ENCODE measurements at regions of chr6 and their contacts with region 1.

Region 1: GRCh38 chr6:135323202-135323668 is 142.1 kb downstream of the MYB start:
- DNase-seq: peak; percentile 82 to 97 (median 86)
- ATAC-seq: peak; percentile 78
- H3K4me3 ChIP-seq: no peak overlapping the region
- H3K27ac ChIP-seq: peak overlapping the region; percentile 91
- H3K4me1 ChIP-seq: peaks cover 28 to 77% of the 10 kb centered on the region in 2 experiments
- H3K27me3 ChIP-seq: no peaks in the 10 kb centered on the region
- CTCF ChIP-seq: no peak; a peak in 1 of 6 replicates
- EP300 ChIP-seq: peak; percentile 100
- POLR2A ChIP-seq: no peak
- RAD21 ChIP-seq: peak; percentile 48 to 51; a peak in 3 of 4 replicates

Region 2: DNA sequence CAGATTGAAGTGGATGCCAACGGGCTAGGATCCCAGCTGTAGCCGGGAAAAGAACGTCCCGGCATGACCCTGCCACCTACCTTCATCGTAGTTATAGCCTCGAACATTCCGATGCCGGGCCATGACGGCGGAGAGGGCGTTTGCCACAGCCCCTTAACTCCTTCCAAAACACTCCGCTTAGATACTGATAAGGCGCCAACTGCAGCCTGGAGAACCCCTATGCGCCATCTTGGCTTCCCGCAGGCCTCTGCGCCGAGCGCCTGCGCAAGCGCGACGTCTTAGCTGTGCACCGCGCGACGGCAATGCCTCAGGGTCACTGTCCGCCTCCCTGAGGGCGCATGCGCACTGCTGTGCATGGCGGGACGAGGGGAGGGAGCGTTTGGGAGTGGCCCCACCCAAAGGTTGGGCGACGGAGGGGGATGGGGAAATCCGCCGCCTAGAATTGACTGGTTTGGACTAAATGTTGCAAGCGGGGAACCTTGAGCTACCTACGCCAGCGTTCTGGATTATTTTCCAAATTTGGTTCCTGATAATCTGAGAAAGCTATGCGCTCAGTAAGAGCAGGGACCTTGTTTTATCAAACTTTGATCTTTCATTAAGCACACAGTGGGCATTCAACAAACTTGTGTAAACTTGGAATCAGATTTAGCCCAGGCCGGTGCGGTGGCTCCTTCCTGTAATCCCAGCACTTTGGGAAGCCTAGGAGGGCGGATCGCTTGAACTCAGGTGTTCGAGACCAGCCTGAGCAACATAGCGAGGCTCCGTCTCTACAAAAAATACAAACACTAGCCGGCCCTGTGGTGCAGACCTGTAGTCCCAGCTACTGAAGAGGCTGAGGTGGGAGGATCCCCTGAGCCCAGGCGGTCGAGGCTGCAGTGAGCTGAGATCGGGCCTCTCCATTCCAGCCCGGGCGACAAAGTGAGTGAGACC is 268.4 kb before region 1 on chr6 and contains the start of gene HBS1L:
- CTCF ChIA-PET with region 1: no interaction called
- POLR2A ChIA-PET with region 1: no interaction called
- in situ Hi-C with region 1: no loop called
- intact Hi-C with region 1: loop called (anchors 5 kb)
- DNase-seq: peak; percentile 97 to 100 (median 98)
- ATAC-seq: peak; percentile 93
- H3K4me3 ChIP-seq: peak within 1 kb of the TSS; percentile 70
- H3K27ac ChIP-seq: peak within 1 kb of the TSS; percentile 94
- H3K4me1 ChIP-seq: peaks cover 3 to 11% of the 10 kb centered on the region in 2 experiments; a peak in 4 of 5 replicates
- H3K27me3 ChIP-seq: no peaks in the 10 kb centered on the region
- CTCF ChIP-seq: no peak
- EP300 ChIP-seq: no peak
- POLR2A ChIP-seq: peak; percentile 92
- RAD21 ChIP-seq: no peak
- polyA plus RNA-seq, gene HBS1L: 101 to 199 TPM

Region 3: DNA sequence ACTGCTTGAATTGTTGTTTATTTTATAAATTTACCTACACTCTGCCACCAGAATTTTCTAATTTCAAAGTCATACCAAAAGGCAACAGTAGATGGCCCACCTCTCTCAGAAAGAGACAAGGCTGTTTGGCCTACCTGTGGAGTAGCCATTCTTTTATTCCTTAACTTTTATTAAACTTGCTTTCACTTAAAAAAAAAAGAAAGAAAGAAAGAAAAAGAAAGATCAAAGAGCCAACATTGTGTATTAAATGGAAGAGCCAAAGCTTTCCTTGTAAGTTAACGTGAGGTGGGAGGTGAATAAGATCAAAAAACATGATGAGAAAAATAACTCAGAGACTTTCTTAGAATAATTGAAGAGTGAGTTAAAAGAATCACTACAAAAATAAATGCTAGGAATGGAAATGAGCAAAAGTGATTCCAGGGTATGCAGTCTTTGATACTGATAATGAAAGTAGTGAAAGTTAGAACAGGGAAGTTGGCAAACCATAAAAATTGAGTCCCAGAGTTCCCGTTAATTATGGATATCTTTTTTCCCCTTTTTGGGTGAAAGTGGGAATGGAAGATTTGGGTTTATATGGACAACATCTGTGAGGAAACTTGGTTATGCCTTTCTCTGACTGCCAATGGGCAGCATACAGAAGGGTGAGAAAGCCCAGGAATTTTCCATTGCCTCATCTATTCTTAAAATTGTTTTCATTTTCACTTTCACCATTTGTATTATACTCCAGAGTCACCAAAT is 178.0 kb before region 1 on chr6:
- CTCF ChIA-PET with region 1: no interaction called
- POLR2A ChIA-PET with region 1: no interaction called
- in situ Hi-C with region 1: no loop called
- intact Hi-C with region 1: loop called (anchors 1 kb)
- DNase-seq: peak; percentile 44 to 76 (median 50)
- ATAC-seq: peak; percentile 60
- H3K4me3 ChIP-seq: no peak overlapping the region
- H3K27ac ChIP-seq: peak overlapping the region; percentile 77
- H3K4me1 ChIP-seq: peaks cover 6 to 55% of the 10 kb centered on the region in 2 experiments
- H3K27me3 ChIP-seq: no peaks in the 10 kb centered on the region
- CTCF ChIP-seq: peak; percentile 61 to 85 (median 71); a peak in 5 of 6 replicates
- EP300 ChIP-seq: no peak
- POLR2A ChIP-seq: no peak
- RAD21 ChIP-seq: peak; percentile 86 to 91

Region 4: DNA sequence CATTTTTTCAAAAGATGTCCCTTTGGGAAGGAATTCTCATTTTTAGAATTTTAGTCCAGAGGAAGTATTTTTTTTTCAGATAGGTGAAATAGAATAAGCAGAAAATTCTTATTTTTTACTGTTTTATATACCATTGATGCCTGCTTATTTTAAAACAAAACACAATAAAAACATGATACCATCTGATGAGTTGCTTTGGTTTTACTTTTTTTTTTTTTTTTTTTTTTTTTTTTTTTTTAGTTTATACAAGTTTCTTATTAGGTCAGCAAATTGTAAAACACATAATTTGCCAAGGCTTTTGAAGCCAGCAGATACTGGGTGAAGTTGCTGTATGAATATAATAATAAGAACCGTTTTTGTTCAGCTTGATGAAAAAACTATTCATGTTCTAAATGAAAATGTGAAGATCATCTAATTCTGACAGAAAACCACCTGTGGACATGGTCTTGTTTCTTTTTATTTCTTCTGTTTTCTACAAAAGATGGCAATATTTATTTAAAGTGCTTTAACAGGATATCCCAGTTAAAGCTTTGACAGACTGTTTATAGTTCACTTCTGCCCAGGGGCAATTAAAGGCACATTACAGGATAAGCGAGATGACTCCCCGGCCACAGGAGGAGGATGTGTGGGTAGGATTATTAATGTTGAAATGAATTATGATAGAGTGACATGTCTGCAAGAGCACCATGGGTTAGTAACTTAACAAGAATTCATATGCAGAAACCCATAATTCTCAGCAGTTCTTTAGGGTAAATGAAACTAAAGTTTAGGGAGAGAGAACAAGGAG is 111.0 kb before region 1 on chr6:
- CTCF ChIA-PET with region 1: no interaction called
- POLR2A ChIA-PET with region 1: interaction called, 3 read pairs
- in situ Hi-C with region 1: no loop called
- intact Hi-C with region 1: loop called (anchors 5 kb)
- DNase-seq: no peak
- ATAC-seq: no peak
- H3K4me3 ChIP-seq: no peak overlapping the region
- H3K27ac ChIP-seq: no peak overlapping the region
- H3K4me1 ChIP-seq: no peaks in the 10 kb centered on the region; a peak in 1 of 5 replicates
- H3K27me3 ChIP-seq: no peaks in the 10 kb centered on the region
- CTCF ChIP-seq: no peak
- EP300 ChIP-seq: no peak
- POLR2A ChIP-seq: no peak
- RAD21 ChIP-seq: no peak

Region 5: GRCh38 chr6:135257631-135258405 is 65.4 kb before region 1 on chr6:
- CTCF ChIA-PET with region 1: no interaction called
- POLR2A ChIA-PET with region 1: no interaction called
- in situ Hi-C with region 1: no loop called
- intact Hi-C with region 1: loop called (anchors 5 kb)
- DNase-seq: peak in 1 of 4 experiments; percentile 50
- ATAC-seq: peak; percentile 58
- H3K4me3 ChIP-seq: no peak overlapping the region
- H3K27ac ChIP-seq: no peak overlapping the region
- H3K4me1 ChIP-seq: peaks cover 16 to 68% of the 10 kb centered on the region in 2 experiments
- H3K27me3 ChIP-seq: no peaks in the 10 kb centered on the region
- CTCF ChIP-seq: peak in 1 of 3 experiments; percentile 47; a peak in 2 of 6 replicates
- EP300 ChIP-seq: no peak
- POLR2A ChIP-seq: no peak
- RAD21 ChIP-seq: peak; percentile 40 to 65

Region 6: GRCh38 chr6:135306740-135307420 is 16.4 kb before region 1 on chr6:
- CTCF ChIA-PET with region 1: no interaction called
- POLR2A ChIA-PET with region 1: interaction called, 5 read pairs
- in situ Hi-C with region 1: no loop called
- intact Hi-C with region 1: loop called (anchors 1 kb)
- DNase-seq: peak in 2 of 4 experiments; percentile 57 to 85
- ATAC-seq: peak; percentile 56
- H3K4me3 ChIP-seq: no peak overlapping the region
- H3K27ac ChIP-seq: peak overlapping the region; percentile 57; the same call in 2 of the 3 replicates
- H3K4me1 ChIP-seq: peaks cover 16 to 49% of the 10 kb centered on the region in 2 experiments
- H3K27me3 ChIP-seq: no peaks in the 10 kb centered on the region
- CTCF ChIP-seq: no peak
- EP300 ChIP-seq: peak; percentile 96
- POLR2A ChIP-seq: no peak
- RAD21 ChIP-seq: peak in 1 of 2 experiments; percentile 46; a peak in 3 of 4 replicates

Region 7: DNA sequence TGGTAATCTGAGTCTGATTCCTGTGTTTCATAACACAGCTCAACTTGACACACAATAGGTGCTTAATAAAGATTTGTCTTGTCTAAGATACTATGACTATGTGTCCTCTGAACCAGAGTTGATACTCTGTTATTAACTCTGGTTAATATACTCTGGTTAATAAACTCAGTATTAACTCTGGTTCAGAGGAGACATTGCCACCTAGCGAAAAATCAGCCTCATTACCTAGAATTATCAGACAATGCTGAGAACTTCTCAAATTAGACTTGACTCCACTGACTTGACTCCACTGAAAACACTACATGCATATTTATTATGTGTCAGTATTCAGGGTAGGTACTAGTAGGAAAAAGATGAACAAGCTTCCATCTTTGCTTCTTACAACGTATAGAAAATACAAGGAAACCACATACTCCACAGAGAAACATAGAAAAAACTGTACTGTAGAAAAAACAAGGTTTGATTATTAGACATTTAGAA is 100.5 kb after region 1 on chr6:
- CTCF ChIA-PET with region 1: no interaction called
- POLR2A ChIA-PET with region 1: no interaction called
- in situ Hi-C with region 1: no loop called
- intact Hi-C with region 1: loop called (anchors 1 kb)
- DNase-seq: peak; percentile 29 to 72 (median 46)
- ATAC-seq: peak; percentile 87
- H3K4me3 ChIP-seq: no peak overlapping the region
- H3K27ac ChIP-seq: peak overlapping the region; percentile 39; the same call in 2 of the 3 replicates
- H3K4me1 ChIP-seq: peaks cover 0 to 29% of the 10 kb centered on the region in 2 experiments; a peak in 3 of 5 replicates
- H3K27me3 ChIP-seq: no peaks in the 10 kb centered on the region
- CTCF ChIP-seq: peak; percentile 46 to 85 (median 68); a peak in 5 of 6 replicates
- EP300 ChIP-seq: no peak
- POLR2A ChIP-seq: no peak
- RAD21 ChIP-seq: peak; percentile 87 to 94

Region 8: GRCh38 chr6:135465307-135465706 is 142.1 kb after region 1 on chr6:
- CTCF ChIA-PET with region 1: no interaction called
- POLR2A ChIA-PET with region 1: no interaction called
- in situ Hi-C with region 1: no loop called
- intact Hi-C with region 1: no loop called
- DNase-seq: no peak
- ATAC-seq: no peak
- H3K4me3 ChIP-seq: no peak overlapping the region
- H3K27ac ChIP-seq: no peak overlapping the region
- H3K4me1 ChIP-seq: no peaks in the 10 kb centered on the region
- H3K27me3 ChIP-seq: no peaks in the 10 kb centered on the region
- CTCF ChIP-seq: no peak
- EP300 ChIP-seq: no peak
- POLR2A ChIP-seq: no peak
- RAD21 ChIP-seq: no peak